ENCODE measurements at regions of chr20 and their contacts with region 1.

Region 1: GRCh38 chr20:12970372-12970821 is 38.4 kb upstream of the SPTLC3 start:
- DNase-seq: peak; percentile 84
- ATAC-seq: peak; percentile 17
- H3K4me3 ChIP-seq: no peak overlapping the region
- H3K27ac ChIP-seq: no peak overlapping the region
- H3K4me1 ChIP-seq: peaks cover 34% of the 10 kb centered on the region
- H3K27me3 ChIP-seq: no peaks in the 10 kb centered on the region
- CTCF ChIP-seq: peak; percentile 88

Region 2: GRCh38 chr20:13089950-13090469 is 119.6 kb after region 1 on chr20:
- CTCF ChIA-PET with region 1: no interaction called
- POLR2A ChIA-PET with region 1: no interaction called
- intact Hi-C with region 1: no loop called
- DNase-seq: no peak
- ATAC-seq: no peak
- H3K4me3 ChIP-seq: no peak overlapping the region
- H3K27ac ChIP-seq: no peak overlapping the region
- H3K4me1 ChIP-seq: no peaks in the 10 kb centered on the region
- H3K27me3 ChIP-seq: no peaks in the 10 kb centered on the region
- CTCF ChIP-seq: no peak

Region 3: DNA sequence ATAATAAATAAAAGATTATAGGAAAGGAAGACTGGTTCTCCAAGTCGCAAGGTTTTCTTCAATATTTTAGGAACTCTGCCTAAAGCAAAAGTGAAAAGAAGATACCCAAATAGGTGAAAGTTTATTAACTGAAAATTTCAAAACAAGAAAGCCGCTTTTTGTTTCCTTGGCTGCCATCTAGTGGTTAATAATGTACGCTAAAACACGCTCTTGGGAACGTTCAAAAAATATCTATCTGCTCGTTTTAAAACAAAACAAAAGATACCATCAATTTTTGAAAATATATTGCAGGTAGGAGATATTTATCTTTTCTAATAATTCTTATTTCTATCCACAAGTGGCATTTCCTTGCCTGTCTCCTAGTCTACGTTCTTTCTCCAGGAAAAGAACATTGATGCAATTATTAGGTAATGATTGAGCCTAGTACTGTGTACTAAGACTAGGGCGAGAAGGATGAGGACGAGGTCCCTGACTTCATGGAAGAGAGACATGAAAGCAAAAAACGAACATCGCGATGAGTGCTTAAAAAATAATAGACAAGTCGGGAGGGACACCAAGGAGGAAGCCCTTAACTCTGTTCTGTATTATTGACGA is 135.6 kb after region 1 on chr20:
- CTCF ChIA-PET with region 1: no interaction called
- POLR2A ChIA-PET with region 1: no interaction called
- intact Hi-C with region 1: loop called (anchors 1 kb)
- DNase-seq: peak; percentile 84
- ATAC-seq: peak; percentile 23; the same call in 1 of the 2 replicates
- H3K4me3 ChIP-seq: no peak overlapping the region
- H3K27ac ChIP-seq: no peak overlapping the region
- H3K4me1 ChIP-seq: peaks cover 17% of the 10 kb centered on the region
- H3K27me3 ChIP-seq: no peaks in the 10 kb centered on the region
- CTCF ChIP-seq: peak; percentile 89

Region 4: GRCh38 chr20:13302647-13303450 is 332.5 kb after region 1 on chr20:
- CTCF ChIA-PET with region 1: no interaction called
- POLR2A ChIA-PET with region 1: no interaction called
- intact Hi-C with region 1: loop called (anchors 1 kb)
- DNase-seq: peak; percentile 73
- ATAC-seq: peak; percentile 97
- H3K4me3 ChIP-seq: no peak overlapping the region
- H3K27ac ChIP-seq: no peak overlapping the region
- H3K4me1 ChIP-seq: no peaks in the 10 kb centered on the region
- H3K27me3 ChIP-seq: peaks cover 25% of the 10 kb centered on the region
- CTCF ChIP-seq: peak; percentile 94

Measured in PC-3 (cell line).